ENCODE measurements at regions of chr19 and their contacts with region 1.

Region 1: DNA sequence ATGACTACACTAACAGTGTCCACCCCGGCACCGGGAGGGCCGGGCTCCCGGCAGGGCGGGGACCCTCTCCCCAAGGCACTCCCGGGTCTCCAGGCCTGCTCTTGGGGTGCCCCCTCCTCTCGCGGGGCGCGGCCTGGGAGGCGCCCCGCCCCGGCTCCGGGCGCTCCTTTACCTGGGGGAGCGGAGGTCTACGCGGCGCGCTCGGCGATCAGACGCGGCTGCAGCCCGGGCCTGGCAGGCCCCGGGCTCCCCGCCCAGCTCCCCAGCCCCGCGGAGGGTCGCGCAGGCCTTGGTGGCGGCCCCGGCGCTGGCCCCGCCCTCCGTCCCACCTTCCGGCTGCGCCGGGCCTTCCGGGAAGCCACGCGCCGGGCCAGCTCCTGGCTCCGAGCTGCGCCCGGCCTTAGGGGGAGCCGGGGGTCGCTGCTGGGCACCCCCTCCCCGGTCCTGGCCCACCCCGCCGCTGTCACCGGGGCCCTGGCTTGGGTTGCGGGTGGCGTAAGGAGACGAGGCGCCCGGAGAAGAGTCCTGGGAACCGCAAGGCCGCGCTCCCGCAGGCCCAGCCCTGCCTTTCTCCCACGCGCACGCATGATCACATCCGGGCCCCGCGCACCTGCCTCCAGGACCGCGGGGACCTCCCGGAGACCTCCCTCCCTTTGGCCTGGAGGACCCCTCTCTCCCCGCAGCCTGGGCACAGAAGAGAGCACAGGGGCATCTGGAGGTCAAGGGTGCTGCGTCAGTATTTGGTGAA is at the start of gene C19orf12:
- DNase-seq: peak; percentile 68
- H3K4me3 Mint-ChIP-seq: peak within 1 kb of the TSS; percentile 88
- H3K27ac Mint-ChIP-seq: peak within 1 kb of the TSS; percentile 97
- H3K4me1 Mint-ChIP-seq: peaks cover 57% of the 10 kb centered on the region
- H3K27me3 Mint-ChIP-seq: peaks cover 4% of the 10 kb centered on the region

Region 2: GRCh38 chr19:29665215-29665825 is 49.8 kb before region 1 on chr19 and contains the start of gene PLEKHF1:
- CTCF ChIA-PET with region 1: interaction called, 48 read pairs
- DNase-seq: peak; percentile 91
- H3K4me3 Mint-ChIP-seq: peak within 1 kb of the TSS; percentile 92
- H3K27ac Mint-ChIP-seq: peak within 1 kb of the TSS; percentile 95
- H3K4me1 Mint-ChIP-seq: peaks cover 63% of the 10 kb centered on the region
- H3K27me3 Mint-ChIP-seq: peaks cover 12% of the 10 kb centered on the region

Region 3: GRCh38 chr19:29671393-29672160 is 43.5 kb before region 1 on chr19:
- CTCF ChIA-PET with region 1: interaction called, 48 read pairs
- DNase-seq: peak; percentile 89
- H3K4me3 Mint-ChIP-seq: peak overlapping the region; percentile 69
- H3K27ac Mint-ChIP-seq: peak overlapping the region; percentile 95
- H3K4me1 Mint-ChIP-seq: peaks cover 94% of the 10 kb centered on the region
- H3K27me3 Mint-ChIP-seq: no peaks in the 10 kb centered on the region

Region 4: DNA sequence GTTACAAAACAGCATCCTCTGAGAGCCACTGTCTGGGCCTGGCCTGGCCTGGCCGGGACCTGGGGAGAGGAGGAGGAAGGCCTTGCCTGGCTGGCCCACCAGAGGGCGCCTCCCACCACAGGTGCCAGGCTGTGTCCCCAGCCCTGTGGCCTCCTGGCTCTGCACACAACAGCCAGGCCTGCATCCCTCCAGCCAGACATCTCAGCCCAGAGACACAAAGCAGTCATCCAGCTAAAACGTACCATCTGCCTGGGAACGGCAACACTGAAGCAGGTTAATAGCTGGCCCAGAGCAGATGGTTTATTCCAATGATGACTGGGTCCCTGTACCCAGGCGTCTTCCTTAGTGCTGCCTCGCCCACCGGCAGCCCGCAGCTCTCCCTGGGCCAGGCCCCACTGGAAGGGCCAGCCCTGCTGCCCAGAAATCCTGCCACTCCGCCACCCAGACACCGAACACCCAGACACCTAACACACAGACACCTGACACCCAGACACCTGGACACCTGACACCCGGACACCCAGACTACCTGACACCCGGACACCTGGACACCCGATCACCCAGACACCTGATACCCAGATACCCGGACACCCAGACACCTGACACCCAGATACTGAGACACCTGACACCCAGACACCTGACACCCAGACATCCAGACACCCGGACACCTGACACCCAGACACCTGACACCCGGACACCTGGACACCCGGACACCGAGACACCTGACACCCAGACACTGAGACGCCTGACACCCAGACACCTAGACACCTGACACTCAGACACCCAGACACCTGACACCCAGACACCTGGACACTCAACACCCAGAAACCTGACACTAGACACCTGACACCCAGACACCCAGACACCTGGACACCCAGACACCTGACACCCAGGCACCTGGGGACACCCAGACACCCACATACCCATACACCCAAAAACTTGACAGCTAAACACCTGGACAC is 20.2 kb before region 1 on chr19:
- CTCF ChIA-PET with region 1: interaction called, 147 read pairs
- DNase-seq: peak; percentile 88
- H3K4me3 Mint-ChIP-seq: no peak overlapping the region
- H3K27ac Mint-ChIP-seq: peak overlapping the region; percentile 44
- H3K4me1 Mint-ChIP-seq: peaks cover 18% of the 10 kb centered on the region
- H3K27me3 Mint-ChIP-seq: no peaks in the 10 kb centered on the region

Region 5: GRCh38 chr19:29704562-29705558 is 10.3 kb before region 1 on chr19:
- CTCF ChIA-PET with region 1: interaction called, 11 read pairs
- DNase-seq: no peak
- H3K4me3 Mint-ChIP-seq: no peak overlapping the region
- H3K27ac Mint-ChIP-seq: peak overlapping the region; percentile 58
- H3K4me1 Mint-ChIP-seq: peaks cover 38% of the 10 kb centered on the region
- H3K27me3 Mint-ChIP-seq: no peaks in the 10 kb centered on the region

Region 6: GRCh38 chr19:29737461-29738000 is 22.4 kb after region 1 on chr19:
- CTCF ChIA-PET with region 1: no interaction called
- DNase-seq: no peak
- H3K4me3 Mint-ChIP-seq: no peak overlapping the region
- H3K27ac Mint-ChIP-seq: no peak overlapping the region
- H3K4me1 Mint-ChIP-seq: no peaks in the 10 kb centered on the region
- H3K27me3 Mint-ChIP-seq: peaks cover 24% of the 10 kb centered on the region